Activated naive CD4-positive, alpha-beta T cell treated with anti-CD3 and anti-CD28 coated beads for 36 hours (primary cell): ENCODE measurements at regions of chr15 and their contacts with region 1.

Region 1: DNA sequence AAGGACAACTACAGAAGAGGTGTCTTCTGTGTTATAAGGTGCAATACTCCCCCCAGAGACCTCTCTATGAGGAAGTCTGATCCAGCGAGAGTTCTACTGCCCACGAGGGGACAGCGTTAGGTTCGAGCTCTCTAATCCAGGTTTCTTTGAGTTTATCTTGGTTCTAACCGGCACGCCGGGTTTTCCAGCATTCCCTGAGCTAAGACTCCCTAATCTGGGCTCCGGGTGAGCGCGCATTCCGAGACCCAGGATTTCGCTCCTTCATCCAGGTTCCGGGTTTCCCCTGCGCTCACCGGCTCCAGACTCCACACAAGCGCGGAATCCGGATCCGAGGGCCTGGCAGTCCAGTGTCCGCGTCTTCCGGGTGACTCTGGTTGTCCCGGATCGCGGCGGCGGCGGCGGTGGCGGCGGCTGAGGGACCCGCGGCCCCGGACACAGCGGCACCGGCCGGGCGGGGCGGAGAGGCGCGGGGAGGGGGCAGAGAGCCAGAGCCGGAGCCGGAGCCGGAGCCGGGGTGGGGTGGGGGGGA is at the start of gene ZNF609:
- DNase-seq: peak; percentile 94
- H3K4me3 Mint-ChIP-seq: peak within 1 kb of the TSS; percentile 85
- H3K27ac Mint-ChIP-seq: peak within 1 kb of the TSS; percentile 82
- H3K4me1 Mint-ChIP-seq: peaks cover 77% of the 10 kb centered on the region
- H3K27me3 Mint-ChIP-seq: no peaks in the 10 kb centered on the region
- total RNA-seq, gene ZNF609: 39.5 to 40.4 TPM

Region 2: GRCh38 chr15:64019764-64020163 is 440.5 kb before region 1 on chr15:
- CTCF ChIA-PET with region 1: no interaction called
- intact Hi-C with region 1: no loop called
- DNase-seq: no peak
- H3K4me3 Mint-ChIP-seq: no peak overlapping the region
- H3K27ac Mint-ChIP-seq: no peak overlapping the region
- H3K4me1 Mint-ChIP-seq: no peaks in the 10 kb centered on the region
- H3K27me3 Mint-ChIP-seq: no peaks in the 10 kb centered on the region

Region 3: DNA sequence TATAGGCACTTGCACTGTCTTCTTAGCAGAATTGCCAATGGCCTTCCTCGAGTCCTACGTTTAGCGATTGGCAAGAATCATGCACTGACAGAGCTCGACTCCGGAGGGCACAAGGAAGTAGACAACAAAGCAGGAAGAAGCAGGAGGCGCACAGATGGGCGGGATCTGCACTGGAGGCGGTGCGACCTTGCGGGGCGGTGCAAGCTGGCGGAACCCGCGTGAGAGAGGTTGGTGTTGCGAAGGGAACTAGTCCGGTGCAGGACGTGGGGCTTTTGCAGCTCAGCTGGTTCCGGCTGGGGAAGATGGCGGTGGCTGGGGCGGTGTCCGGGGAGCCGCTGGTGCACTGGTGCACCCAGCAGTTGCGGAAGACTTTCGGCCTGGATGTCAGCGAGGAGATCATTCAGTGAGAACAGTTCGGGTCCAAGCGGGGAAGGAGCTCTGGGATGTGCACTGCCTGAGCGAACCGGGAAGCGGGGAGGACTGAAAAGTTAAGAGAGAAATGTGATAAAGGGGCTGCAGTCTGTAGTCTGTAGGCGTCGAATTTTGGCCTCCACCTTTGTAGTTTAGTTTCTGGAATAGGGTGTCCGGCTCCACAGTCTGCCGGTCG is 72.6 kb before region 1 on chr15 and contains the start of gene TRIP4:
- CTCF ChIA-PET with region 1: interaction called, 4 read pairs
- intact Hi-C with region 1: loop called (anchors 5 kb)
- DNase-seq: peak; percentile 98
- H3K4me3 Mint-ChIP-seq: peak within 1 kb of the TSS; percentile 94
- H3K27ac Mint-ChIP-seq: peak within 1 kb of the TSS; percentile 78
- H3K4me1 Mint-ChIP-seq: peaks cover 15% of the 10 kb centered on the region
- H3K27me3 Mint-ChIP-seq: no peaks in the 10 kb centered on the region
- total RNA-seq, gene TRIP4: 13.7 to 14.5 TPM

Region 4: DNA sequence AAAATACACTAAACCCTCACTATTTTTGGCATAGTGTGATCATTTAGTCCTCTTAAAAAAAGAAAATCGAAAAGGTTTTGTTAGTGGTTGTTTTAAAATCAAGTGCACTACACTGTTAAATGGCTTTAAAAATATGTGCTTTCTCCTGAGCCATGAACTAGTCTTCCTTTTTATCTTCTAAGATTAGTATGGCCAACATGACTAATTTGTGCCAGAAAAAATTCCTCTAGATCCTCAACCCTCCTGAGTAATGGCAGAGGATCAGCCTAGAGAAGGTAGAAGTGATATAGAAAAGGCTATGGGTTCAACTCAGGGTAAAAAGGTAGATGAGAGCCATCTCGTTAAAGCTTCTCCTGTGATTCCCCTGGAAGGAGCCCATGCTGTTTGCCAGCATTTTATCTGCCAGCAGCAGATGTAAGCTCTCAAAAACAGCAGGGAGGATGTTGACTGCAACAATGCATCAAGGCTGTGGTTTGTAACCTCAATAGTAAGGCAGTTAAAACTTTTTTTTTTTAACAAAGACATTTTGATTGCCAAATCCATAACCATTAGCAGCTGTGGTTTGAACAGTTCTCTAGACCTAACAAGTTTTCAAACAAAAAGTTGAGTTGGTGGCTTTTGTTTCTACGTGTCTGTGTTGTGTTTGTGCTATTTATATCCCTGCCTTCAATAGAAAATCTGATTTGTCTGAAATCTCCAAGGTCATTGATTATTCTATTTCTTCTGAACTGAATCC is 30.1 kb before region 1 on chr15:
- CTCF ChIA-PET with region 1: interaction called, 6 read pairs
- intact Hi-C with region 1: loop called (anchors 2 kb)
- DNase-seq: peak; percentile 50
- H3K4me3 Mint-ChIP-seq: no peak overlapping the region
- H3K27ac Mint-ChIP-seq: peak overlapping the region; percentile 76
- H3K4me1 Mint-ChIP-seq: peaks cover 45% of the 10 kb centered on the region
- H3K27me3 Mint-ChIP-seq: no peaks in the 10 kb centered on the region

Region 5: GRCh38 chr15:64443747-64444621 is 16.3 kb before region 1 on chr15:
- CTCF ChIA-PET with region 1: no interaction called
- intact Hi-C with region 1: loop called (anchors 1 kb)
- DNase-seq: peak; percentile 20
- H3K4me3 Mint-ChIP-seq: peak overlapping the region; percentile 66
- H3K27ac Mint-ChIP-seq: peak overlapping the region; percentile 94
- H3K4me1 Mint-ChIP-seq: peaks cover 62% of the 10 kb centered on the region
- H3K27me3 Mint-ChIP-seq: no peaks in the 10 kb centered on the region

Region 6: DNA sequence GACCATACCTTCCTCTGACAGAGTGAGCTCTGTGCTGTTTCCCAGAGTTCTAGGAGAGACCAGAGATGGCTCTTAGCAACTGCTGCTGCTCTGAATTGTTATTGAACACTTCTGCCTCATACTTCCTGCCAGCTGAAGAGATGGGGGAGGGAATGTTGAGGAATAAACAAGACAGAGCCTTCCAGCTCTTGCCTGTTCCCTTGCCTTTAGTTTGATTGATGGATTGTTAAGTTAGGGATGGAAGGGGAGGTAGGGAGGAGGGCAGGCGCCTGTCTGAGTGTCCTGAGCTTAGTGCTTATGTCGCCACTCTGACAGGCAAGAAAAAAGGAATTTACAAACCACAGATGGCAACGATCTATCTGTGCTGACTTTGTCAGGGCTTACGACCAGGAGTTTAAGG is 42.9 kb after region 1 on chr15:
- CTCF ChIA-PET with region 1: interaction called, 4 read pairs
- intact Hi-C with region 1: loop called (anchors 2 kb)
- DNase-seq: peak; percentile 27
- H3K4me3 Mint-ChIP-seq: peak overlapping the region; percentile 5
- H3K27ac Mint-ChIP-seq: peak overlapping the region; percentile 86
- H3K4me1 Mint-ChIP-seq: peaks cover 83% of the 10 kb centered on the region
- H3K27me3 Mint-ChIP-seq: no peaks in the 10 kb centered on the region

Region 7: DNA sequence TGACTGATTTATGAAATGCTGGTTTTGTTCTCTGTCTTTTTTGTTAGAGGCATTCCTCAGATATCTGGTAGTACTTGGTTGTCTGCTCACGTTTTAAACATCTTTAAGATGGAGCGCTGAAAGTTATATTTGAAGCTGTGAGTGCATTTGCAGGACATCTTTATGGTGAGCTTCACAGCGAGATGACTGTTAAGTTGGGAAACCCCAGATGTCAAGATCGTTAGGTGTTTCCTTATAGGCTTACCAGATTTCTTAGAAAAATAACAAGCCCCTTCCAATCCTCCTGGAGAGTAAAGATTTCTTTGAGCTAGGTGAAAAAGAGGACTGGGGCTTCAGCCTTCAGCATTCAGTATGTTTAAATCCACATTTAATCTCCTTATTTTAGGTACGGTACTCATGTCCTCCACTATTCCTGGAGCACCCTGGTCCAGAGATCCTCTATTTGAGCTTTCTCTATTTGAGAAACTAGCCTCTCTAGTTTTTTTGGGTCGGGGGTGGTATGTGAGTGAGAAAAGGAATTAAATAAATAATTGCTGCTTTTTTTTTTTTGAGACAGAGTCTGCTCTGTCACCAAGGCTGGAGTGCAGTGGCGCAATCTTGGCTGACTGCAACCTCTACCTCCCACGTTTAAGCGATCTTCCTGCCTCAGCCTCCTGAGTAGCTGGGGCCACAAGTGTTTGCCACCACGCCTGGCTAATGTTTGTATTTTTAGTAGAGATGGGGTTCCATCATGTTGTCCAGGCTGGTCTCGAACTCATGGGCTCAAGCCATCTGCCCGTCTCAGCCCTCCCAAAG is 72.4 kb after region 1 on chr15:
- CTCF ChIA-PET with region 1: no interaction called
- intact Hi-C with region 1: loop called (anchors 2 kb)
- DNase-seq: peak; percentile 54
- H3K4me3 Mint-ChIP-seq: peak overlapping the region; percentile 24
- H3K27ac Mint-ChIP-seq: peak overlapping the region; percentile 54
- H3K4me1 Mint-ChIP-seq: peaks cover 68% of the 10 kb centered on the region
- H3K27me3 Mint-ChIP-seq: no peaks in the 10 kb centered on the region

Region 8: GRCh38 chr15:64640146-64640871 is 180.0 kb after region 1 on chr15:
- CTCF ChIA-PET with region 1: no interaction called
- intact Hi-C with region 1: no loop called
- DNase-seq: no peak
- H3K4me3 Mint-ChIP-seq: no peak overlapping the region
- H3K27ac Mint-ChIP-seq: no peak overlapping the region
- H3K4me1 Mint-ChIP-seq: peaks cover 45% of the 10 kb centered on the region
- H3K27me3 Mint-ChIP-seq: no peaks in the 10 kb centered on the region